Testis (tissue), 5 donors: ENCODE measurements at regions of chr12 and their contacts with region 1.

Region 1: DNA sequence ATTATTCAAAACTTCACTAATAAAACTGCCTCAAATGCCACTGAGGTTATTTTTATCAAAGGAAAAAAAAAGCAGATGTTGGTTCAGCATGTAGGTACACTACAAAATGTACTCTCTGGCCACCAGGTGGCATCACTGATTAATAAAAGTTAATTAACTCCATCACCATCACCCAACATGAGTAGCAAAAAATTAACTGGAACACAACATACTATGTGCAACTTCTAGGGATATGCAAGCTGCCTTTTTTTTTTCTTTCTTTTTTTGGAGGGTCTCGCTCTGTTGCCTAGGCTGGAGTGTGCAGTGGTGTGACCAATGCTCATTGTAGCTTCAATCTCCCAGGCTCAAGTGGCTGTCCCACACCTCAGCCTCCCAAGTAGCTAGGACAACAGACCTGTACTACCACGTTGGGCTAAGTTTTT is 43.8 kb upstream of the NR2C1 start:
- DNase-seq: peak; percentile 87
- H3K4me3 ChIP-seq: no peak overlapping the region
- H3K27ac ChIP-seq: no peak overlapping the region
- H3K4me1 ChIP-seq: peaks cover 17% of the 10 kb centered on the region
- H3K27me3 ChIP-seq: no peaks in the 10 kb centered on the region
- CTCF ChIP-seq: peak; percentile 79 to 88 (median 85)
- POLR2A ChIP-seq: no peak

Region 2: GRCh38 chr12:94829552-94829951 is 287.6 kb before region 1 on chr12:
- intact Hi-C with region 1: no loop called
- DNase-seq: no peak
- H3K4me3 ChIP-seq: no peak overlapping the region
- H3K27ac ChIP-seq: no peak overlapping the region
- H3K4me1 ChIP-seq: peaks cover 11% of the 10 kb centered on the region
- H3K27me3 ChIP-seq: no peaks in the 10 kb centered on the region
- CTCF ChIP-seq: no peak
- POLR2A ChIP-seq: no peak

Region 3: DNA sequence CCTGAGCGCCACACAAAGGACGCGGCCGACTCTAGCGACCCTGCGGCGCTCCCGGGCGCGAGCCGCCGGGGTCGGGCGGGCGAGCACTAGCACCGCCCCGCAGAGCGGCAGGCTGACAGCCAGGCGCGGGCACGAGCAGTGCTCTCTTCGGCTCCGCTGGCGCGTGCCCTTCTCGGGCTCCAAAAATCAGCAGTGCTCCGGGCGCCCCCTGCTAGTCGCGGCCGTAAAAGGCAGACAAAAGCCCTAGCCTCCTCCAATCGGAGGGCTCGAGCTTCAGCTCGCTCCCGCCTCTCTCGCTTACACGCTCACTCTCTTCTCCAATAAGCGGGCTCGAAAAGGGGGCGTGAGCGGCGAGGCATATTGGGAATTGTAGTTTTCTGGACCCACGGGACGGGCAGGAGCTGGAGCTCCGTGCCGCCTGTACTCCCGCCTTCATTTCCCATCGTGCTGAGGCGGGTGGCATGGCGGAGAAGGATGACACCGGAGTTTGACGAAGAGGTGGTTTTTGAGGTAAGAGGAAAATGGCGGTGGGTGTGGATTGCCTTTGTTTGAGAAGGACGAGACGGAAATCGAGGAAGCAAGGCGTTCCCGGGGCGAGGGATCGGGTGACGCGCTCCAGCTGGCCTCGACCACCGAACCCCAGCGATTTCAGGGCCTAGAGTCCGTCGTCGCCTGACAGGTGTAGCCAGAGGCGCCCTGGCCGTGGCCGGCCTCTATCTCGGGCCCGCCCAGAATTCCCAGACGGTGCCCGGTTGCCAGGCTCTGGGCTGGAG is 100.4 kb after region 1 on chr12 and contains the starts of genes FGD6 and VEZT:
- intact Hi-C with region 1: loop called (anchors 5 kb)
- DNase-seq: peak; percentile 99
- H3K4me3 ChIP-seq: peak within 1 kb of the TSS; percentile 84 to 91
- H3K27ac ChIP-seq: peak within 1 kb of the TSS; percentile 93 to 96
- H3K4me1 ChIP-seq: peaks cover 20% of the 10 kb centered on the region
- H3K27me3 ChIP-seq: no peaks in the 10 kb centered on the region
- CTCF ChIP-seq: peak; percentile 53 to 72 (median 59)
- POLR2A ChIP-seq: peak; percentile 44
- total RNA-seq, gene FGD6: 13.1 to 13.6 TPM
- total RNA-seq, gene VEZT: 94.6 to 112 TPM

Region 4: GRCh38 chr12:95304673-95305198 is 187.5 kb after region 1 on chr12:
- intact Hi-C with region 1: no loop called
- DNase-seq: no peak
- H3K4me3 ChIP-seq: no peak overlapping the region
- H3K27ac ChIP-seq: no peak overlapping the region
- H3K4me1 ChIP-seq: no peaks in the 10 kb centered on the region
- H3K27me3 ChIP-seq: no peaks in the 10 kb centered on the region
- CTCF ChIP-seq: no peak
- POLR2A ChIP-seq: no peak

Region 5: GRCh38 chr12:95532851-95533250 is 415.7 kb after region 1 on chr12:
- intact Hi-C with region 1: loop called (anchors 10 kb)
- DNase-seq: no peak
- H3K4me3 ChIP-seq: no peak overlapping the region
- H3K27ac ChIP-seq: no peak overlapping the region
- H3K4me1 ChIP-seq: no peaks in the 10 kb centered on the region
- H3K27me3 ChIP-seq: no peaks in the 10 kb centered on the region
- CTCF ChIP-seq: no peak
- POLR2A ChIP-seq: no peak